Dendritic cell treated with granulocyte-macrophage colony-stimulating factor and Interleukin-4, amounts not matched to agents 40 ng/mL and 50 ng/mL, for 4 days (primary cell): ENCODE measurements at regions of chr2 and their contacts with region 1.

Region 1: DNA sequence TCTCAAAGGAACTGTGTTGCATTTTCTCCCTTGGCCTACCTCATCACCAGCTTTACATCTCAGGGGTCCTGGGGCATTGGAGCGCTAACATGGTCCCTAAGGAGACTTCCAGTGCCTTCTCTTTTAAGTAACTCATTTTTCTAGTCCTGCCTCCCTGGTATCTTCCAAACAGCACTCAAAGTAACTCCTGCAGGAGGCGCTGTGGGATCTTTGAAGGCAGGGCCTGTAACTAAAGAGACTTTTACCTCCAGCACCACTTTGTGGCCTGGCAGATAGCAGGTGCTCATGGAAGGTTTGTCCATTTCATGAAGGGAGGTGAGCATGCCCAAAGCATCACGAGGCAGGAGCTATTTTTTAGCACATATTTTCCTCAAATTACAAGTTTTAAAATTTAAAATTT is 411.0 kb upstream of the GYPC start:
- H3K4me3 Mint-ChIP-seq: no peak overlapping the region
- H3K27ac Mint-ChIP-seq: no peak overlapping the region
- H3K4me1 Mint-ChIP-seq: no peaks in the 10 kb centered on the region
- H3K27me3 Mint-ChIP-seq: peaks cover 1% of the 10 kb centered on the region

Region 2: DNA sequence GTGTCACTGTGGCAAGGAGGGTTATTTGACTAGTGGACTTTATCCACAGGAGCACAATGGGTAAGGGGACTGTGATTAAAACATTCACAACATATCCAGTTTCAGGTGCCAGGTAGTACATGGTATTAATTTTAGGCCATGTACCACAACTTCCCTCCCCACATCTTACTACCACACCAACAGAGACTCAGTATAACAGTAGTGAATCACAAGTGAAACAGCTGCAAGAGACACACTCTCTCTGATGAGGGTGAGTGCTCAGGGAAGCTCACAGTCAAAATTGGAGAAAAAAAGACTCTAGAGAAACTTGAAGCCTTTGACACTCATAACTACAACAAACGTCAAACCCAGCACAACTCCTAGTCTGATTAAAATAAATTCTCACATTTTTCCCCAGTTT is 43.4 kb after region 1 on chr2:
- intact Hi-C with region 1: no loop called
- H3K4me3 Mint-ChIP-seq: no peak overlapping the region
- H3K27ac Mint-ChIP-seq: no peak overlapping the region
- H3K4me1 Mint-ChIP-seq: no peaks in the 10 kb centered on the region
- H3K27me3 Mint-ChIP-seq: no peaks in the 10 kb centered on the region

Region 3: DNA sequence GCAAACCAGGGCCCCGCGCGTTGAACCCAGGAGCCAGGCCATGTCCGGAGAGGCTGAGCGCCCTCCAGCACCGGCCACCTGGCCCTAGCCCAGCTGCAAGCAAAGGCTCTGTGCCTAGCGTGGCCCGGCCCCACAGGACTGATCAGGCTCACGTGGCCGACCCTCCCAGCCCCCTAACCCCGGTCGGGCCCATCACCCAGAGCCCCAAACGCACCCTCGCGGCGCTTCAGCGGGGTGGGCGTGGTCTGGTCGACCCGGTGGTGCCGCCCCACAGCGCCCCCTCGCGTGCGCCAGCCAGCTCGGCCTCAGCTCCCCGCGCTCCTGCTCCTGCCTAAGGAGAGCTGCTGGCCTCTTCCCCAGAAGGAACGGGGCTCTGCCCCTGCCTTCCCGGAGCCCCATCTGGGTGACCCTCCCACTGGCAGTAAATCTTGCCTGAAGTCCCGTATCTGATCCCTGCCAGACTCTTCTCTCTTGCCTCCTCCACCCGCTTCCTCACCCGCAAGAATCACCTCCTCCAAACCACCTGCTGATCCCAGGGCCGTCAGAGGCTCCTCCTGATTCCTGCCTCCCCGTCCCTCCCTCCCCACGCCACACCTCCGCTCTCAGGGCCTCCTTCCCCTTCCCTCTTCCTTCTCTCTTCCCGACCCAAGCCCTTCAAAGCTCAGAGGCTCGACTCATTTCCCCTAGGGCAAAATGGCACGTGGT is 641.4 kb after region 1 on chr2:
- intact Hi-C with region 1: loop called (anchors 10 kb)
- H3K4me3 Mint-ChIP-seq: peak overlapping the region; percentile 66
- H3K27ac Mint-ChIP-seq: peak overlapping the region; percentile 8
- H3K4me1 Mint-ChIP-seq: peaks cover 9% of the 10 kb centered on the region
- H3K27me3 Mint-ChIP-seq: peaks cover 7% of the 10 kb centered on the region